ENCODE measurements at regions of chr10 and their contacts with region 1.

Region 1: GRCh38 chr10:93062514-93063143 is 2.0 kb downstream of the CYP26C1 start:
- DNase-seq: peak in 1 of 2 experiments; percentile 82
- H3K4me3 ChIP-seq: peak overlapping the region; percentile 29 to 59 (median 46)
- H3K27ac ChIP-seq: no peak overlapping the region
- H3K4me1 ChIP-seq: peaks cover 3 to 33% (median 26%) of the 10 kb centered on the region in 4 experiments
- H3K27me3 ChIP-seq: peaks cover 88 to 100% (median 92%) of the 10 kb centered on the region in 4 experiments
- CTCF ChIP-seq: peak; percentile 73 to 82 (median 74)
- EP300 ChIP-seq: no peak
- POLR2A ChIP-seq: no peak
- RAD21 ChIP-seq: peak; percentile 48 to 52; a peak in 3 of 4 replicates

Region 2: GRCh38 chr10:93006435-93007039 is 56.1 kb before region 1 on chr10:
- CTCF ChIA-PET with region 1: interaction called, 20 read pairs
- POLR2A ChIA-PET with region 1: no interaction called
- DNase-seq: no peak
- H3K4me3 ChIP-seq: no peak overlapping the region
- H3K27ac ChIP-seq: no peak overlapping the region
- H3K4me1 ChIP-seq: no peaks in the 10 kb centered on the region
- H3K27me3 ChIP-seq: no peaks in the 10 kb centered on the region
- CTCF ChIP-seq: peak in 2 of 3 experiments; percentile 70 to 74; a peak in 3 of 4 replicates
- EP300 ChIP-seq: no peak
- POLR2A ChIP-seq: no peak
- RAD21 ChIP-seq: peak; percentile 79 to 82

Region 3: GRCh38 chr10:93074147-93074596 is 11.5 kb after region 1 on chr10:
- CTCF ChIA-PET with region 1: interaction called, 147 read pairs
- POLR2A ChIA-PET with region 1: interaction called, 26 read pairs
- DNase-seq: no peak
- H3K4me3 ChIP-seq: peak overlapping the region; percentile 66 to 83 (median 69)
- H3K27ac ChIP-seq: no peak overlapping the region
- H3K4me1 ChIP-seq: peaks cover 4 to 30% (median 25%) of the 10 kb centered on the region in 4 experiments
- H3K27me3 ChIP-seq: peaks cover 66 to 79% (median 78%) of the 10 kb centered on the region in 4 experiments
- CTCF ChIP-seq: 0 out of 4 replicates have a peak, but pooled peaks of 1 of the 3 experiments have one; percentile 14
- EP300 ChIP-seq: no peak
- POLR2A ChIP-seq: no peak
- RAD21 ChIP-seq: no peak